Vagina (tissue), 2 donors: ENCODE measurements at regions of chr6 and their contacts with region 1.

Region 1: DNA sequence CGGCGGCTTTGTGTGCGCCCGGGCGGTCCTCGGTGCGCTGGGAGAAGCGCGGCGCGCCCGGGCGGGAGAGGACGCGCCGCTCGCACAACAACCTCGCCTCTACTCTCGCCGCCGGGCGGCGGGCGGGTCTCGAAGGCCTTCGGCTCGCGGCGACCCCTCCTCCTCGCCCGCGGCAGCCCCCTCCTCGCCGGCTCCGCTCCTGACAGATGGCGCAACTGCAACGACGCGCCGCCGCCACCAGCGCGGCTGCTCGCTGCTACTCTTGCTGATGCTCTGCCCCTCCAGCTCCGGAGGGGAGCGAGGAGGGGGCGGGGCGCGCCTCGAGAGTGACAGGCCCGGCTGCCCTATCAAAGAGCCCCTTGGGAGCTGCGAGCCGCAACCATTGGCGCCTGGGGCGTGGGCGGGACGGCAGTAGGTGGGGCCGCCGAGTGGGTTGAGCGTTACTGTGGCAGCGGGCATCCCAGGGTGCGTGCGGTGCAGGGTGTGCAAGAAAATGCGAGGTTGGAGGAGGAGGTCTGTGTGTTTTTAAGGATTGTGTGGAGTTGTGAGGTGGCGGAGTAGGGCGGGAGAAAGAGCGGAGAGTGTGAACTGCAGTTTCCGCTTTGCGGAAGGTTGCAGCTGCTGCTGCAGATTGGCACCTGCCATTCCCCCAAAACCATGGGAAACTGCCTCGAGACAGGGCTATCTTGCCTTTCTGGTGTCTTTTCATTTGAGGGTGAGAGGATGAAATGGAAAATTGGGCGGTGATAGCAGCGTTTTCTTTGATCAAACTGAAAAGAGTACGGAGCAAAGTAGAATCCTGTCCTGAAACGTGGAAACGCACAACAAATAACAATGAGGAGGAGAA is at the start of gene FYN:
- DNase-seq: peak in 1 of 2 donors; percentile 98
- H3K4me3 ChIP-seq: peak within 1 kb of the TSS; percentile 64 to 90
- H3K27ac ChIP-seq: peak within 1 kb of the TSS; percentile 93
- H3K4me1 ChIP-seq: peaks cover 31% of the 10 kb centered on the region
- H3K27me3 ChIP-seq: no peaks in the 10 kb centered on the region
- CTCF ChIP-seq: peak in 1 of 3 experiments; percentile 51
- POLR2A ChIP-seq: peak; percentile 76 to 93
- total RNA-seq, gene FYN: 130 TPM

Region 2: DNA sequence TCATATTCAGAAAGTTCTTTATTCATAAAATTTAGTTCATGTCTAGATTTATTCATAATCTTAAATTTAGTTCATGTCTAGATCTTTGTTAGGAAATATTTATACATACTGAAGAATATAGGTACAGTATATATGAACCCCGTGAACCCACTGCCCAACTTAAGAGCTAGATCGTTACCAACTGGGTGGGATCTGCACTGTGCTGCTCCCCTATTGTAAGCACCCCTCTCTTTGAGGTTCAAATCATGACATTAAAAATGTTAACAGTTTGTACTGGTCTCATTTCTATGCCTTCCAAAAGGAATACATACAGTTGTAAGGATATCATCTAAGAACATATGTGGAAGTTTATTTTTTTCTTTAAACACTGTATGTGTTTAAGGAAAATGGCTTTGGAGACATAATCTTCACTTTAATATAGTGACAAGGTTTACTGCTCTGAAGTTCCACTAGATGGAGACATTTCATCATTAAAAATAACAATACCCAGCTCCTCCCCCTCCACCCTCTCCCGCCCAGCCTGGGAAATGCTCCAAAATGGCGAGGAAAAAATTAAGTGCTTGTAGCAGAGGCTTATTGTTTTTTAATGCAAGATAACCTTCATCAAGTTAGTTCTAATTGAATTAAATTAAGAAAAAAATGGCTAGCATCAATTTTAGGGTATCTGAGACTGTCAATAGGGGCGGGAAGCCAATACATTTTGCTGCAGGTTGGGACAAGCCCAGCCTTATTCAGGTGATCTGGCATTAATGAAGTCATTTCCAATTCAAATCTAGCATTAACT is 163.6 kb before region 1 on chr6:
- intact Hi-C with region 1: loop called (anchors 5 kb)
- DNase-seq: peak in 1 of 2 donors; percentile 82
- H3K4me3 ChIP-seq: no peak overlapping the region
- H3K27ac ChIP-seq: peak overlapping the region; percentile 56
- H3K4me1 ChIP-seq: peaks cover 34% of the 10 kb centered on the region
- H3K27me3 ChIP-seq: no peaks in the 10 kb centered on the region
- CTCF ChIP-seq: peak; percentile 75 to 91 (median 77)
- POLR2A ChIP-seq: no peak

Region 3: GRCh38 chr6:111997078-111997852 is 123.9 kb after region 1 on chr6:
- intact Hi-C with region 1: loop called (anchors 10 kb)
- DNase-seq: no peak
- H3K4me3 ChIP-seq: peak overlapping the region in 1 of 2 donors; percentile 16
- H3K27ac ChIP-seq: no peak overlapping the region
- H3K4me1 ChIP-seq: no peaks in the 10 kb centered on the region
- H3K27me3 ChIP-seq: no peaks in the 10 kb centered on the region
- CTCF ChIP-seq: peak; percentile 74 to 93 (median 83)
- POLR2A ChIP-seq: no peak

Region 4: DNA sequence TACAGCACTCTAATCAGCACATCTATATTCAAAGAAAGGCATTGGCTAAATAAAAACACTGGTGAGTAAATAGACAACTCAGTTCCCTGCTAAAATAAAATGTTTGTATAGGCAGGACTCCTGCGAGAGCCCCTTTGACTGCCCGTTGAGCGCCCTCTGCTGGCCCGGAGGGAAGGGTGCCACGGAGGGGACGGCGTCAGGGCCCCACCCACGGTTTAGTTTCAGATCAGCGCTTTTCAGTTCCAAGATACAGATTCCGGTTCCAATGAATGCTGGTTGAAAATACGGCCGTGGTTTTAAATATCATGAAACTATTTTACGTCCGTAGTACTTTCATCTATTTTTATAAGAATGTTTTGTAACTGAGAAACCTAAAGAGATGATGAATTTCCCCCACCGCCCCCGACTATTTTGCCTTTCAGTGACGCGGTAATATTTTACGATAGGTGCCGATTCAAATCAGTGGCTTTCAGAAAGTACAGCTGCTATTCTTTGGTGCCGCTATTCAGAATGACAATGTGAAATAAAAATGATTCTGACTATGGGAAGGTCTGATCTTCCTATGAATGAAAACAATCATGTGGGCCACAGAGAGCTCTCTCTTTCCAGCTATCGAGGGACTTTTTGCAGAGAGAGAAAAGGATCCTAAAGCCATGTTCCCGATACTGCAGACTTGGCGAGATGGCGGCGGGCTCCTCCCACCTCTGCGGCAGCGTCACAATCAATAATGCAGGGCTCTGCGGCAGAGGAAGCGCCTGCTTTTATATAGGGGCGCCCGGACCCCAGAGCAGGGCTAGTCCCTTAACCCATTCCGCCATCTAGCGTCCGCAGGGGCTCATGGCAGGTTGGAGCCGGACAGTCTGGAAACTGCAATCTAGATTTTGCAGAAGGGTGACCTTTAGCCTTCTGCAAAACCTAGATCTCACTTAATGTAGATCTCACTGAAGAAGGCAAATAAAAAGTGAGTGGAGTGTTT is 169.9 kb after region 1 on chr6:
- intact Hi-C with region 1: loop called (anchors 2 kb)
- DNase-seq: no peak
- H3K4me3 ChIP-seq: peak overlapping the region; percentile 58 to 60
- H3K27ac ChIP-seq: peak overlapping the region; percentile 88
- H3K4me1 ChIP-seq: peaks cover 15% of the 10 kb centered on the region
- H3K27me3 ChIP-seq: no peaks in the 10 kb centered on the region
- CTCF ChIP-seq: peak; percentile 82 to 96 (median 92)
- POLR2A ChIP-seq: peak in 1 of 2 donors; percentile 22

Region 5: DNA sequence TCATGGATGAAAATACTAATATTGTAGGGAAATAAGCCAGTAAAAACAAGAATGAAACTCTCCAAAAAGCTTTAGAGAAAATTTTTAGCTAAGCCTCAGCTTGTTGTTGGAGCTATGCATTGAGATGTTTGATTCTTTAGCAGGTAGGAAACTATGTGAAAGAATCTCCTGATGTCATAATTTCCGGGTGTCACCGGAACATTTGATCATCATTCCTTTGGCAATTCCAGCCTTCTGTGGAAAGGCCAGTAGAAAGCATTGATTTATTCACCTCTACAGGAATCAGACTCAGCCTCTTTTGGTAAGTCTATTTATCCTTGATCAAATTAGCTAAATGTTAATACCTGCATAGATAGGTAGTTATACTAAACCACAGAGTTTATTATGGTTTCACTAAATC is 223.5 kb after region 1 on chr6:
- intact Hi-C with region 1: no loop called
- DNase-seq: no peak
- H3K4me3 ChIP-seq: no peak overlapping the region
- H3K27ac ChIP-seq: no peak overlapping the region
- H3K4me1 ChIP-seq: no peaks in the 10 kb centered on the region
- H3K27me3 ChIP-seq: no peaks in the 10 kb centered on the region
- CTCF ChIP-seq: no peak
- POLR2A ChIP-seq: no peak